Right ventricle myocardium inferior (tissue), 1 donor: ENCODE measurements at regions of chr6 and their contacts with region 1.

Region 1: GRCh38 chr6:163338671-163339405 is 75.7 kb upstream of the QKI start:
- DNase-seq: no peak
- ATAC-seq: peak; percentile 58

Region 2: GRCh38 chr6:163260111-163260895 is 78.5 kb before region 1 on chr6:
- intact Hi-C with region 1: loop called (anchors 5 kb)
- DNase-seq: no peak
- ATAC-seq: peak; percentile 14

Region 3: DNA sequence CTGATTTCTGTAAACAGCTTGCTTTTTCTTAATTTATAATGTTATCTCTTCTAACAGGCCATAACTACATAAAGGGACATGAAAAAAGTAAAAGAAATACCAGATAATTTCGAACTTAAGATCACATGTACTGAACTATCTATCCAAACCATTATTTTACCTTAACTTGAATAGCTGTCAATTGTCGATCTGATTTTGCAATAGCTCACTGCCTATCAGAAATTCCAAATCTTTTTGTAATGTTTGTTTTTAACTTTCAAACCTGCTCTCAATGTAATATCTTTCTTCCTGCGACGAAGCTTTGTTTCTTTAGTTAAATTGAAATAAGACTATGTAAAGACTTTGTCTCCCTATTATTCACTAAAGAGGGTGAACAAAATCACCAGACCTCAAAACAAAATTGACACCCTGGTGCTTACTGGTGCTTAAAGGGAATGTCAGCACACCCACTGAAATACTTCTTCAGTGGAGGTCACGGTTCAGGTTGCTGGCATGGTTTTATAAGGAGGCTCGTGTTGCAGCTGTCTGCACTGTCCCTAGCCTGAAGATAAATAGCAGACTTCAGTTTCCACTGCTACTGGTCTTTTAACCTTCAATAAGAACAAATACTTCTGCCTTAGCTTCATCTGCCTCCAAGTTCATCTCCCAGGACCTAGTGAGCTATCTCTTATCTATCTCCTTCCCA is 41.9 kb before region 1 on chr6:
- intact Hi-C with region 1: loop called (anchors 2 kb)
- DNase-seq: no peak
- ATAC-seq: peak; percentile 82

Region 4: DNA sequence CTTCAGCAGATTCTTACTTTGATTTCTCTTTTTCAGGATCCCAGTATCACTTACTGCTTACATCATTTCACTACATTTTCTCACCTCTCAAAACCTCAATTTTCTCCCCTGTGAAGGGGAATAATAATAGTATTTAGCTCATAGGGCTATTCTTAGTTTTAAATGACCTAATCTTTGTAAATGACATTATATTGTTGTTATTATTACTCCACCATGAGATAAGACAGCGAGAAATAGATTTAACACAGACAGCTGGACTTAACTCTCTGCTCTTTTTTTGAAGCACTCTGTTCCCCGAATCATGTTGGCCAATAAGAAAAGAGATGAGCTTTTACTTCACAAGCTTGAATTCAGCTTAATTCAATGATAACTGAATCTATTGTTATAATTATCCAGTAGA is 32.8 kb before region 1 on chr6:
- intact Hi-C with region 1: loop called (anchors 2 kb)
- DNase-seq: no peak
- ATAC-seq: no peak

Region 5: GRCh38 chr6:163398815-163399214 is 60.0 kb after region 1 on chr6:
- intact Hi-C with region 1: loop called (anchors 5 kb)
- DNase-seq: peak; percentile 76
- ATAC-seq: peak; percentile 55

Region 6: DNA sequence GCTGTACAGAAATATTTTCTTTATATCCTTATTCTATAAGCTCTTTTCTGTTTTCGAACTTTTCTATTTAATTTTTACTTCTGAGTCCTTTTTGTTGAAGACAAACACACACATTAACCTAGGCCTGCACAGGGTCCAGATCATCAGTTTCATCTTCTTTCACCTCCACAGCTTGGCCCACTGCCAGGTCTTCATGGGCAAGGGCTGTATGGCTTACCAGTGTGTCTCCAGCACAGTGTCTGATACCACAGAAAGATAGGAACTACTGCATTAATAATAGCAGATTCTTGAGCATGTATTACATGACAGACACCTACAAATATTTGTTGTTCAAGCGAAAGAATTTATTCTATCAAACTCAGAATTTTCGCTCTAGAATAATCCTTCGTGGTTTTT is 100.1 kb after region 1 on chr6:
- intact Hi-C with region 1: no loop called
- DNase-seq: peak; percentile 81
- ATAC-seq: peak; percentile 51